Prostate gland (tissue), 2 donors: ENCODE measurements at regions of chr6 and their contacts with region 1.

Region 1: GRCh38 chr6:56902641-56903464 is 52.1 kb upstream of the BEND6 start:
- DNase-seq: no peak
- H3K4me3 ChIP-seq: no peak overlapping the region
- H3K27ac ChIP-seq: no peak overlapping the region
- H3K4me1 ChIP-seq: no peaks in the 10 kb centered on the region
- H3K27me3 ChIP-seq: no peaks in the 10 kb centered on the region
- CTCF ChIP-seq: peak; percentile 37 to 60 (median 52)
- POLR2A ChIP-seq: no peak

Region 2: DNA sequence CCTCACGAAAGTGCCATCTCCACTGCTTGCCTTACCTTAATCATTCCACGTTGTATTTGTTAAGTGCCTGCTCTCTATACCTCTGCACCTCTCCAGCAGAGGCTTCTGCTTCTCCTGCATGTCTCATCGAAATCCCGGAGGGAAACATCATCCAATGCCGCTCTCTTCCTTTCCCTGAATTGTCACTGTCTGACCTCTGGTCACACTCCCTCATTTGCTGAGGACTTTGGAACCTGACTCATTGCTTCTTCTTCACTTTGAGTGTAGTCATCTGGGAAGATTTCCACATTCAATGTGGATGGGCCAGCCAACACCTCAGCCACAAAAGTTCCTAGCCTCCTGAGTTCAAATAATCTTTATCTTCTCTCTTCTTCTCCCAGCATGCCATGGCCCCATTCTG is 26.9 kb before region 1 on chr6:
- intact Hi-C with region 1: no loop called
- DNase-seq: no peak
- H3K4me3 ChIP-seq: no peak overlapping the region
- H3K27ac ChIP-seq: no peak overlapping the region
- H3K4me1 ChIP-seq: no peaks in the 10 kb centered on the region
- H3K27me3 ChIP-seq: no peaks in the 10 kb centered on the region
- CTCF ChIP-seq: no peak
- POLR2A ChIP-seq: no peak

Region 3: GRCh38 chr6:57021086-57021720 is 118.3 kb after region 1 on chr6:
- intact Hi-C with region 1: loop called (anchors 5 kb)
- DNase-seq: no peak
- H3K4me3 ChIP-seq: no peak overlapping the region
- H3K27ac ChIP-seq: no peak overlapping the region
- H3K4me1 ChIP-seq: no peaks in the 10 kb centered on the region
- H3K27me3 ChIP-seq: no peaks in the 10 kb centered on the region
- CTCF ChIP-seq: peak in 3 of 4 experiments; percentile 45 to 56 (median 55)
- POLR2A ChIP-seq: no peak

Region 4: GRCh38 chr6:57221936-57222742 is 319.3 kb after region 1 on chr6 and contains the start of gene RAB23:
- intact Hi-C with region 1: no loop called
- DNase-seq: peak; percentile 80
- H3K4me3 ChIP-seq: peak within 1 kb of the TSS; percentile 92 to 99
- H3K27ac ChIP-seq: peak within 1 kb of the TSS; percentile 89 to 93
- H3K4me1 ChIP-seq: no peaks in the 10 kb centered on the region
- H3K27me3 ChIP-seq: no peaks in the 10 kb centered on the region
- CTCF ChIP-seq: no peak
- POLR2A ChIP-seq: peak; percentile 80
- total RNA-seq, gene RAB23: 20.4 to 22.3 TPM